Right ventricle myocardium superior (tissue), 1 donor: ENCODE measurements at regions of chr4 and their contacts with region 1.

Region 1: GRCh38 chr4:148441986-148442831 is at the start of gene NR3C2:
- DNase-seq: peak; percentile 99
- ATAC-seq: peak; percentile 89
- total RNA-seq, gene NR3C2: 24.7 TPM

Region 2: GRCh38 chr4:148025981-148026380 is 416.2 kb before region 1 on chr4:
- intact Hi-C with region 1: loop called (anchors 10 kb)
- DNase-seq: no peak
- ATAC-seq: peak; percentile 8

Region 3: GRCh38 chr4:148288448-148288847 is 153.8 kb before region 1 on chr4:
- intact Hi-C with region 1: loop called (anchors 10 kb)
- DNase-seq: peak; percentile 84
- ATAC-seq: peak; percentile 85